Right ventricle myocardium superior (tissue), 1 donor: ENCODE measurements at regions of chrX and their contacts with region 1.

Region 1: GRCh38 chrX:50747471-50747900 is 66.5 kb downstream of the SHROOM4 start:
- DNase-seq: no peak
- ATAC-seq: no peak

Region 2: DNA sequence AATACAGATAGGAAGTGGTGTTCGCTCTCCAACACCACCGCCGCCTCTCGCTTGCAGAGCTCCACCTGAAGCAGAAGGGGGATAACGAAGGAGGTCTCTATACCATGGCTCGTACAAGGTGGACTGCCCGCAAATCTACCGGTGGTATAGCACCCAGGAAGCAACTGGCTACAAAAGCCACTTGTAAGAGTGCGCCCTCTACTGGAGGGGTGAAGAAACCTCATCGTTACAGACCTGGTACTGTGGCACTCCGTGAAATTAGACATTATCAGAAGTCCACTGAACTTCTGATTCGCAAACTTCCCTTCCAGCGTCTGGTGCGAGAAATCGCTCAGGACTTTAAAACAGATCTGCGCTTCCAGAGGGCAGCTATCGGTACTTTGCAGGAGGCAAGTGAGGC is 157.8 kb after region 1 on chrX:
- intact Hi-C with region 1: loop called (anchors 5 kb)
- DNase-seq: no peak
- ATAC-seq: no peak

Region 3: GRCh38 chrX:50988649-50989048 is 241.2 kb after region 1 on chrX:
- intact Hi-C with region 1: loop called (anchors 10 kb)
- DNase-seq: no peak
- ATAC-seq: no peak